B cell (primary cell): ENCODE measurements at regions of chr3 and their contacts with region 1.

Region 1: GRCh38 chr3:187738331-187739093 is 6.8 kb downstream of the BCL6 start:
- DNase-seq: peak; percentile 81
- ATAC-seq: peak; percentile 46
- H3K4me3 ChIP-seq: peak overlapping the region; percentile 66 to 93 (median 84)
- H3K4me3 Mint-ChIP-seq: peak overlapping the region; percentile 97
- H3K27ac ChIP-seq: peak overlapping the region in 1 of 2 donors; percentile 66
- H3K27ac Mint-ChIP-seq: peak overlapping the region; percentile 75
- H3K4me1 ChIP-seq: peaks cover 34 to 57% of the 10 kb centered on the region in 2 donors
- H3K4me1 Mint-ChIP-seq: peaks cover 62% of the 10 kb centered on the region
- H3K27me3 ChIP-seq: no peaks in the 10 kb centered on the region
- H3K27me3 Mint-ChIP-seq: no peaks in the 10 kb centered on the region
- CTCF ChIP-seq: peak; percentile 82

Region 2: DNA sequence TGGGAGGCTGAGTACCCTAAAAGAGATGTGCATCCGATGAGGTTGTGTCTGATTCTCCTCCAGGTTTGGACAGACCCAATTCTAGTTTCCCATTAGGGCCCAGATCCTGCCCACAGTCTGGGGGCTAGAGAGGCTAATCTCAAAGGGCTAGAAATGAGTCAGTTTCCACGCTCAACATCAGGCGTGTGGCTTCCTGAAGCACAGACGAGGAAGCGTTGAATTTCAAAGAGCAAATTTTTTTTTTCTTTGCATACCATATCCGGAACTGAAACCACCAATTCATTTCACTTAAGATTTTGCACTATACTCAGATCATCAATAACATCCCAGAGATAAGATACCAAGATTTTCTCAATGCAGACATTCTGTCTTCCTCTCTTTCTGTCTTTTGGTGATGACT is 180.5 kb after region 1 on chr3:
- CTCF ChIA-PET with region 1: no interaction called
- POLR2A ChIA-PET with region 1: no interaction called
- intact Hi-C with region 1: no loop called
- DNase-seq: peak; percentile 77
- ATAC-seq: peak; percentile 86
- H3K4me3 ChIP-seq: peak overlapping the region; percentile 11 to 62 (median 44)
- H3K4me3 Mint-ChIP-seq: peak overlapping the region; percentile 90
- H3K27ac ChIP-seq: peak overlapping the region; percentile 45 to 61
- H3K27ac Mint-ChIP-seq: peak overlapping the region; percentile 87
- H3K4me1 ChIP-seq: peaks cover 20 to 22% of the 10 kb centered on the region in 2 donors
- H3K4me1 Mint-ChIP-seq: peaks cover 31% of the 10 kb centered on the region
- H3K27me3 ChIP-seq: peaks cover 0 to 9% (median 2%) of the 10 kb centered on the region in 4 experiments
- H3K27me3 Mint-ChIP-seq: peaks cover 51% of the 10 kb centered on the region
- CTCF ChIP-seq: no peak

Region 3: DNA sequence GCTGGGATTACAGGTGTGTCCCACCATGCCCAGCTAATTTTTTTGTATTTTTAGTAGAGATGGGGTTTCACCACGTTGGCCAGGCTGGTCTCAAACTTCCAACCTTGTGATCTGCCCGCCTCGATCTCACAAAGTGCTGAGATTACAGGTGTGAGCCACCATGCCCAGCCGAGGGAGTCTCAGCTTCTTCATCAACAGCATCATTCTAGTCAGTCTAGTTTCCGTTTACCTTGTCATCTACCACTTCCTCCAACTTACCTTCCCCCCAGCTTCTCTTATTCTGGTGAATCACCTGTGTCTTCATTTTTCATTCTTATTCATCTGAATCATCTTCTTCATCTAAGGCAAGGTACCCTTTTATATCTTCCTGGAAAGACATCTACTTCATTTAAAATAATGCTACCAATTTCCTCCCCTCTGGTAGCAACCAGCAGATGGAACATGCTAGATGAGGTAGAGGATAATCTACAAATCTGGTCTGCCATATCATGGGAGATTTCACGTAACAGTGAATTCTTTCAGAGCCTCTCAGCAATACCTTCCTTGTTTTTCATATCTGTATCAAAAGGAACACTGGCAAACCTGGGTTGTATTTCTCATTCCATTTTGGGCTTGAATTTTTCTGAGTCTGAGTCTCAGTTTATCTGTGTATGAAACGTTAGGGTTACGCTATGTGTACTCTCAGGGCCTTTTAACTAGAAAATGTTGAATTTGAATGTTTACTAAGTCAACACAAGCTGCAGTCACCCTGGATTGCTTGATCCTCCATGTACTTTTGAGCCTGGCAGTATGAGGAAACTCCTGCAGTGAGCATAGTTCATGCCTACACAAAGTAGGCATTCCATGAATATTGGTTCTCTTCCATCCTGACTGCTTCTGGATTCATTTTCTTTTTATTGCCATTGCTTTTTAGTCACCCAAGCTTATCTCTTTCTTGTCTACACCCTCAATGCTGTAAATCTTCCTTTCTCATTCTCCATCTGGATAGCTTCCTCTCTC is 432.2 kb after region 1 on chr3:
- CTCF ChIA-PET with region 1: interaction called, 12 read pairs
- POLR2A ChIA-PET with region 1: no interaction called
- intact Hi-C with region 1: no loop called
- DNase-seq: peak; percentile 51
- ATAC-seq: peak; percentile 31
- H3K4me3 ChIP-seq: no peak overlapping the region
- H3K4me3 Mint-ChIP-seq: no peak overlapping the region
- H3K27ac ChIP-seq: peak overlapping the region in 1 of 2 donors; percentile 41
- H3K27ac Mint-ChIP-seq: peak overlapping the region; percentile 3
- H3K4me1 ChIP-seq: peaks cover 28 to 30% of the 10 kb centered on the region in 2 donors
- H3K4me1 Mint-ChIP-seq: peaks cover 39% of the 10 kb centered on the region
- H3K27me3 ChIP-seq: no peaks in the 10 kb centered on the region
- H3K27me3 Mint-ChIP-seq: no peaks in the 10 kb centered on the region
- CTCF ChIP-seq: no peak

Region 4: GRCh38 chr3:188389711-188390342 is 651.3 kb after region 1 on chr3:
- CTCF ChIA-PET with region 1: interaction called, 12 read pairs
- POLR2A ChIA-PET with region 1: no interaction called
- intact Hi-C with region 1: no loop called
- DNase-seq: peak; percentile 86
- ATAC-seq: peak; percentile 88
- H3K4me3 ChIP-seq: peak overlapping the region in 1 of 5 experiments; percentile 42
- H3K4me3 Mint-ChIP-seq: peak overlapping the region; percentile 82
- H3K27ac ChIP-seq: peak overlapping the region; percentile 94 to 96
- H3K27ac Mint-ChIP-seq: peak overlapping the region; percentile 99
- H3K4me1 ChIP-seq: peaks cover 55 to 75% of the 10 kb centered on the region in 2 donors
- H3K4me1 Mint-ChIP-seq: peaks cover 80% of the 10 kb centered on the region
- H3K27me3 ChIP-seq: no peaks in the 10 kb centered on the region
- H3K27me3 Mint-ChIP-seq: no peaks in the 10 kb centered on the region
- CTCF ChIP-seq: no peak

Region 5: GRCh38 chr3:188573291-188573940 is 834.9 kb after region 1 on chr3:
- CTCF ChIA-PET with region 1: interaction called, 46 read pairs
- POLR2A ChIA-PET with region 1: no interaction called
- intact Hi-C with region 1: loop called (anchors 2 kb)
- DNase-seq: peak; percentile 59
- ATAC-seq: peak; percentile 62
- H3K4me3 ChIP-seq: no peak overlapping the region
- H3K4me3 Mint-ChIP-seq: peak overlapping the region; percentile 52
- H3K27ac ChIP-seq: no peak overlapping the region
- H3K27ac Mint-ChIP-seq: peak overlapping the region; percentile 57
- H3K4me1 ChIP-seq: peaks cover 11 to 20% of the 10 kb centered on the region in 2 donors
- H3K4me1 Mint-ChIP-seq: peaks cover 26% of the 10 kb centered on the region
- H3K27me3 ChIP-seq: no peaks in the 10 kb centered on the region
- H3K27me3 Mint-ChIP-seq: no peaks in the 10 kb centered on the region
- CTCF ChIP-seq: peak; percentile 22

Region 6: DNA sequence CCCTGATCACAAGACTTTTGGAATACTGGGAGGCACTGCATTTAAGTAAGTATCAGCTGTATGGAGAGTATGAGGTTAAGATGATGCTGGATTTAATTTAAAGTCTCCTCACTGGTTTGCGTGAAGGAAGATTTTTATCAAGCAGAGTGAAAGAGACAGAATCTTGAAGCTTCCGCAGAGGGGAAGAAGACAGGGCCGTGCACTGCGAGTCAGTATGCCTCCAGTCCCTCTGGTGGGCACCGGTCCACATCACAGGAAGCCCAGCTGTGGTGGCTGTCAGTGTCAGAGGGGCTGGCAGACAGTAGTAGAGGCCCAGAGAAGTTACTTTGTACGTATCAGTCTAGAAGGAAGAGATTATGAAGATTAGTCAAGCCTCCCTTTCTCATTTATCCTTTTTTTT is 1054.3 kb after region 1 on chr3:
- CTCF ChIA-PET with region 1: interaction called, 22 read pairs
- POLR2A ChIA-PET with region 1: interaction called, 3 read pairs
- intact Hi-C with region 1: no loop called
- DNase-seq: peak; percentile 18
- ATAC-seq: no peak
- H3K4me3 ChIP-seq: no peak overlapping the region
- H3K4me3 Mint-ChIP-seq: no peak overlapping the region
- H3K27ac ChIP-seq: no peak overlapping the region
- H3K27ac Mint-ChIP-seq: no peak overlapping the region
- H3K4me1 ChIP-seq: peaks cover 7 to 8% of the 10 kb centered on the region in 2 donors
- H3K4me1 Mint-ChIP-seq: peaks cover 16% of the 10 kb centered on the region
- H3K27me3 ChIP-seq: no peaks in the 10 kb centered on the region
- H3K27me3 Mint-ChIP-seq: no peaks in the 10 kb centered on the region
- CTCF ChIP-seq: no peak

Region 7: GRCh38 chr3:189049438-189050236 is 1311.1 kb after region 1 on chr3:
- CTCF ChIA-PET with region 1: interaction called, 23 read pairs
- POLR2A ChIA-PET with region 1: no interaction called
- intact Hi-C with region 1: no loop called
- DNase-seq: no peak
- ATAC-seq: no peak
- H3K4me3 ChIP-seq: no peak overlapping the region
- H3K4me3 Mint-ChIP-seq: no peak overlapping the region
- H3K27ac ChIP-seq: no peak overlapping the region
- H3K27ac Mint-ChIP-seq: peak overlapping the region; percentile 7
- H3K4me1 ChIP-seq: peaks cover 4% of the 10 kb centered on the region in 2 donors
- H3K4me1 Mint-ChIP-seq: peaks cover 7% of the 10 kb centered on the region
- H3K27me3 ChIP-seq: peaks cover 0 to 5% (median 0%) of the 10 kb centered on the region in 4 experiments
- H3K27me3 Mint-ChIP-seq: peaks cover 35% of the 10 kb centered on the region
- CTCF ChIP-seq: no peak